H1 (cell line): ENCODE measurements at regions of chr2 and their contacts with region 1.

Region 1: GRCh38 chr2:127675331-127676261 is at the start of gene LIMS2:
- DNase-seq: peak in 1 of 2 experiments; percentile 66
- H3K4me3 ChIP-seq: peak within 1 kb of the TSS; percentile 46 to 70 (median 66)
- H3K27ac ChIP-seq: no peak within 1 kb of the TSS
- H3K4me1 ChIP-seq: peaks cover 0 to 4% (median 0%) of the 10 kb centered on the region in 4 experiments; a peak in 3 of 7 replicates
- H3K27me3 ChIP-seq: peaks cover 10 to 57% (median 33%) of the 10 kb centered on the region in 4 experiments
- CTCF ChIP-seq: no peak
- EP300 ChIP-seq: no peak
- POLR2A ChIP-seq: no peak
- RAD21 ChIP-seq: peak; percentile 25 to 48; a peak in 3 of 4 replicates
- total RNA-seq, gene LIMS2: 4.8 and 4.9 TPM in 2 replicates

Region 2: DNA sequence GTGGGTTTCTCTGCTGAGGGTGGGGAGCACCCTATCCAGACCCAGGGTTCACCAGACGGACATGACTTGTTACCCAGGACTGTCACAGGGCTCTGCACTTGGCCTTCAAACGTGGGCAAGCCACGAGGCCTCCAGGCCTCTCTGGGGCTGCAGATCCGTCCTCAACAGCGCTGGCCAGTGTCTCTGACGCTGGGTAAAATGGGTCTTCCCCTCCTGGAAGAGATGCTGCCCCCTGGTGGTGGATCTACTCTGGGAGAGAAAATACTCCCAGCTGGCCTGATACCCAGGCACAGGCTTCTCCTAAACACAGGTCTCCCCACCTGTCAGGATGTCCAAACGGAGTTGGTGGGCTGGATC is 25.9 kb before region 1 on chr2:
- CTCF ChIA-PET with region 1: interaction called, 34 read pairs
- POLR2A ChIA-PET with region 1: no interaction called
- DNase-seq: peak in 1 of 2 experiments; percentile 95
- H3K4me3 ChIP-seq: no peak overlapping the region
- H3K27ac ChIP-seq: no peak overlapping the region
- H3K4me1 ChIP-seq: peaks cover 0 to 5% (median under 1%) of the 10 kb centered on the region in 4 experiments; a peak in 2 of 7 replicates
- H3K27me3 ChIP-seq: peaks cover 0 to 2% (median 0%) of the 10 kb centered on the region in 4 experiments; a peak in 1 of 7 replicates
- CTCF ChIP-seq: peak in 2 of 3 experiments; percentile 84 to 90; a peak in 3 of 4 replicates
- EP300 ChIP-seq: no peak
- POLR2A ChIP-seq: no peak
- RAD21 ChIP-seq: peak; percentile 64 to 76

Region 3: GRCh38 chr2:127664065-127664894 is 11.3 kb before region 1 on chr2:
- CTCF ChIA-PET with region 1: interaction called, 7 read pairs
- POLR2A ChIA-PET with region 1: interaction called, 21 read pairs
- DNase-seq: no peak
- H3K4me3 ChIP-seq: peak overlapping the region; percentile 25 to 63 (median 45)
- H3K27ac ChIP-seq: no peak overlapping the region
- H3K4me1 ChIP-seq: peaks cover 0 to 3% (median 0%) of the 10 kb centered on the region in 4 experiments; a peak in 3 of 7 replicates
- H3K27me3 ChIP-seq: peaks cover 9 to 33% (median 25%) of the 10 kb centered on the region in 4 experiments
- CTCF ChIP-seq: no peak
- EP300 ChIP-seq: no peak
- POLR2A ChIP-seq: no peak
- RAD21 ChIP-seq: no peak

Region 4: GRCh38 chr2:127701193-127701650 is 25.6 kb after region 1 on chr2 and contains the start of gene SFT2D3:
- CTCF ChIA-PET with region 1: interaction called, 40 read pairs
- POLR2A ChIA-PET with region 1: interaction called, 10 read pairs
- DNase-seq: peak; percentile 91
- H3K4me3 ChIP-seq: peak within 1 kb of the TSS; percentile 61 to 80 (median 63)
- H3K27ac ChIP-seq: peak within 1 kb of the TSS; percentile 96
- H3K4me1 ChIP-seq: peaks cover 0 to 4% (median 3%) of the 10 kb centered on the region in 4 experiments; a peak in 6 of 7 replicates
- H3K27me3 ChIP-seq: no peaks in the 10 kb centered on the region
- CTCF ChIP-seq: no peak
- EP300 ChIP-seq: no peak
- POLR2A ChIP-seq: peak; percentile 96 to 97
- RAD21 ChIP-seq: no peak; a peak in 1 of 4 replicates
- total RNA-seq, gene SFT2D3: 7.1 and 7.3 TPM in 2 replicates